Heart left ventricle (tissue), 16 donors: ENCODE measurements at regions of chr21 and their contacts with region 1.

Region 1: DNA sequence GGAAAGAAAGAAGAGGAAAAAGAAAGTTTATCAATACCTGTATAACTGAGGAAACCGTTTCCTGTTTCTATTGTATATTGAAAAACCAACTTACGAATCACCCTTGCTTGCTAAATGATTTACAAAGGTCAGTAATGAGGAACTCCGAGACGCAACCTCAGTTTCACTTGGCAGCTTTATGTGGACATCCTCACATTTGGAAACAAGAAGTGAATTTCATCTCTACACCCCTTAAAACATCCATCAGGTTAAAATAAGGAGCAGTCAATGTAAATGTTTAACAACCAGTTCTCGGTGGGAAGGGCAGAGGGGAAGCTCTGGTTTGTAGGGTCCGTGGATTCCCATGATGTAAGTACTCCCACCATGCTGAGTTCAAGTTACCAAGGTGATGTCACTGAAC is 481.7 kb upstream of the RUNX1 start:
- DNase-seq: no peak
- ATAC-seq: no peak
- H3K4me3 ChIP-seq: no peak overlapping the region
- H3K27ac ChIP-seq: peak overlapping the region in 1 of 12 donors; percentile 48
- H3K4me1 ChIP-seq: peaks cover 0 to 35% (median 0%) of the 10 kb centered on the region in 12 donors
- H3K27me3 ChIP-seq: peaks cover 0 to 5% (median 0%) of the 10 kb centered on the region in 9 donors
- CTCF ChIP-seq: no peak
- POLR2A ChIP-seq: no peak

Region 2: DNA sequence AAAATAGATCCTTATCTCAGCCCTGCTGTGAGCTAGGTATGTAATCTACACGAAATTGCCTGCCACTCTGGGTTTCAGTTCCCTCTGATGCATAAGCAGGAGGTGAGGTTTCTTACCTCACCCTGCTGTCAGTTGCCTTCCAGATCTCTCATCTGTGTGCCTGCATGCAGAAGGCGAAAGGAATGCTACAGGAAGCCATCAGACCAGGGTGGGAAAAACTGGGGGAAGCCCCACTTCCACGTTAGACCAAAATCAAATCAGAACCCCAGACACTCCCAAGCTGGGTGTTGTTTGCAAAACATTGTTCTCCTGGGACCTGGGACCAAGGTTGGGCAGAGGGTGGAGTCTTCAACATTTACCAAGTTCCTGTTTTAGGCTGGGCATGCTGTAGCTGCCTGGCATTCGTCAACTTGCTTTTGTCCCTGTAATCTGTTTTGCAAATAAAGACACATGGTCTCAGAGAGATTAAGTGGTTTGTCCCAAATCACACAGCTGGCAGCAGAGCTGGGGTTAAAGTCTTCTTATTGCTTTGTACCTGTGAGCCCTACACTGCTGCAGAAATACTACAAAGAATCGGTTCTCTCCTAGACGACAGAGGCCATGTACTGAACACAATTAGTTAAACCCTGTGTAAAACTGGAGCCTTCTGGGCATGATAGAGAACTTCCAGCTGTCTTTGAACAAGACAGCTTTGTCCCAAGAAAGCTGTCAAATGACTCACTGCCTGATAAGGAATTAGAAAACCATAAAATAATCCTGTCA is 91.9 kb before region 1 on chr21:
- intact Hi-C with region 1: no loop called
- DNase-seq: no peak
- ATAC-seq: peak in 3 of 4 donors; percentile 7 to 47 (median 38)
- H3K4me3 ChIP-seq: no peak overlapping the region
- H3K27ac ChIP-seq: no peak overlapping the region
- H3K4me1 ChIP-seq: peaks cover 0 to 12% (median 0%) of the 10 kb centered on the region in 12 donors
- H3K27me3 ChIP-seq: peaks cover 0 to 8% (median 0%) of the 10 kb centered on the region in 9 donors
- CTCF ChIP-seq: no peak
- POLR2A ChIP-seq: no peak

Region 3: DNA sequence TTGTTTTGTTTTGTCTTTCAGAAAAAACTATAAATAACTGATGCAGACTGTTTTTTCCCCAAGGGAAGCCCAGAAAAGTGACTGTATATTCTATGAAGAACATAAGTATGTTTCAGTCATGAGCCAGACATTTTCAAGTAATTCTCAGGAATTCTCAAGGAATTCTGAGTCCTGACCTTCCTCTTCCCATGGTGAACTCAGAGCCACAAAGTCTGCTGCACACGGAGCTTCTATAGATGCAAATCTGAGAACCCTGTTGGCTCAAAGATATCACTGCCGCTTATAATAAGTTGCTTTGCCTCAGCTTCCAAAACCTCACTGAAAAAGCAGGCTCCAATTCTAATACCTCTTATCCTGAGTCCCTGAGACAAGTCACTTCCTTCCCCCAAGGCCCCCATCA is 63.2 kb before region 1 on chr21:
- intact Hi-C with region 1: no loop called
- DNase-seq: no peak
- ATAC-seq: no peak
- H3K4me3 ChIP-seq: no peak overlapping the region
- H3K27ac ChIP-seq: no peak overlapping the region
- H3K4me1 ChIP-seq: peaks cover 0 to 11% (median 0%) of the 10 kb centered on the region in 12 donors
- H3K27me3 ChIP-seq: no peaks in the 10 kb centered on the region
- CTCF ChIP-seq: no peak
- POLR2A ChIP-seq: no peak

Region 4: GRCh38 chr21:35491920-35492678 is 38.7 kb before region 1 on chr21:
- intact Hi-C with region 1: no loop called
- DNase-seq: no peak
- ATAC-seq: peak; percentile 28 to 74 (median 66)
- H3K4me3 ChIP-seq: no peak overlapping the region
- H3K27ac ChIP-seq: peak overlapping the region in 3 of 12 donors; percentile 24 to 75 (median 41)
- H3K4me1 ChIP-seq: peaks cover 0 to 18% (median 0%) of the 10 kb centered on the region in 12 donors
- H3K27me3 ChIP-seq: no peaks in the 10 kb centered on the region
- CTCF ChIP-seq: no peak
- POLR2A ChIP-seq: no peak

Region 5: DNA sequence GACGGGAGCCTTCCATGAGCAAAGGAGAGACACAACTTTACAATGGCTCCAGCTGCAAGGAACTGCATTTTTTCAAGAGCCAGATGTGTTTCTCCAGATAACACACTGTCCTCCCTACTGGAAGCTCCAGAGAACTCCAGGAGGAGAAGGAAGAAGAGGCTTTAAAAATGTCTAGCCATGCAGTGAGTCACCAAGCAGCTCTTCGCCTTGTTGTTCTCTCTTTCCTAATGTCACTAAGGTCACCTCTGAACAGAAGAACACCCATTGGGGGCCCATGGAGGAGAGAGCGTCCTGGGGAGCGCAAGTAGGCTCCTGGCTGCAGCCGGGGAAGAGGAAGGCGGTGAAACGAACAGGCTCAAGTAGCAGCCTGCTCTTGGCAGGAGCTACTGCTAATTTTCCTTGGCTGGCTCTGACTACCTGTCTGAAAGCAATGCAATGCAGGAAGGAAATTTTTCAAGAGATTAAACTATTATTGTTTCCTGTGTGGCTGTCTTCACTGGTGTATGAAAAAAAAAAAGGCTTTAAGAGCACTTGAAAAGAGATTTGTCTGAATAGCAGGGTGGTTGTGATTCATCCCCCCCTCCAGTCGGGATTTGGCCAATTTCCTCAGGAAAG is 207.7 kb after region 1 on chr21:
- intact Hi-C with region 1: loop called in 1 of 10 experiments (anchors 10 kb)
- DNase-seq: peak in 3 of 5 donors; percentile 10 to 45 (median 28)
- ATAC-seq: peak in 2 of 4 donors; percentile 40 to 81
- H3K4me3 ChIP-seq: no peak overlapping the region
- H3K27ac ChIP-seq: peak overlapping the region in 7 of 12 donors; percentile 47 to 76 (median 61)
- H3K4me1 ChIP-seq: peaks cover 0 to 18% (median 0%) of the 10 kb centered on the region in 12 donors
- H3K27me3 ChIP-seq: no peaks in the 10 kb centered on the region
- CTCF ChIP-seq: no peak
- POLR2A ChIP-seq: no peak